Activated B cell treated with CpG ODN at 0.5 μM for 24 hours (primary cell): ENCODE measurements at regions of chr3 and their contacts with region 1.

Region 1: DNA sequence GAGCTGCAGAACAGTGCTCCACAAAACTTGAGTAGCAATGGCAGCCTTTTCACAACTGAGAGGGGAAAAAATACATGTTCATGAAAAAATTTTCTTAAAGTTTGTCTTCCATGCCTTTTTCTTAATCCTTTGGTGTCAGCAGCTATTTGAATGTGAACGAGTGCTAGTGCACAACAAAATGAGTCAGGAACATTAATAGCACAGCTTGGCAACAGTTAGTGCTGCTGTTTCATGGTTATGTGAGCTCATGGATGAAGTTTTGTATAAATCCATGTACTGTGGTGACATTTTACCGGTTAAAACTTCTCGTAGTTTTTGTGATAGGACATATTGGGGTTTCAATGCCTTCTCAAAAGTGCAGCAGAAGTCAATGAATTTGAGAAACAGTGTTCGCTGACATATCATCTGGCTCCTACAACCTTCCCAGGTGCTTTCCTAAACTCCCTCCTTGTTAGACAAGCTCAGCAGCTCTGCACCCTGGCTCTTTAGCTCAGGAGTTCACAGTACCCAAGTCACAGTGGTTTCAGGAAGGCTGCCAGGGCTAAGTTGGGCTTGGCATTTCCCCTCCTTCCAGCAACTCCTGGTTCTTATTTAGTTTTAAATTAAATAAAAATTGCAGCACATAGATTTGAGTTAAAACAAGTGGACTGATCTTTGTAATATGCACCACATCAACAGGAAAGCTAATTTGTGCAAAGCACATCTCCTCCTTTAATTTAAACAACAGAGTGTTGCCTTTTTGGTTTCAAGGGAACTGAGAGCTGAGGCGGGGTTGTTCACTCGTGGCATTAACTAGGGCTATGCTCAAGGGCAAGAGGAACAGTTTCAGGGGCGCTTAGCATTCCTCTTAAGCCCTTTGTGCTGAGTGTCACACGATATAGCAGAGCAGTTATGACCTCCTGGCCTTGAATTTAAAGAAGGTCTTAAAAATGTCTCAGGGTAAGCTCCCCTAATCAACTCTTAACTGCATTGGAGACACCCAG is 362.8 kb downstream of the CHST2 start:
- DNase-seq: no peak
- ATAC-seq: peak; percentile 49
- H3K4me3 Mint-ChIP-seq: no peak overlapping the region
- H3K27ac Mint-ChIP-seq: no peak overlapping the region
- H3K4me1 Mint-ChIP-seq: peaks cover 44% of the 10 kb centered on the region
- H3K27me3 Mint-ChIP-seq: no peaks in the 10 kb centered on the region
- CTCF ChIP-seq: no peak

Region 2: GRCh38 chr3:143421556-143421955 is 60.8 kb before region 1 on chr3:
- CTCF ChIA-PET with region 1: no interaction called
- POLR2A ChIA-PET with region 1: no interaction called
- intact Hi-C with region 1: no loop called
- DNase-seq: no peak
- ATAC-seq: no peak
- H3K4me3 Mint-ChIP-seq: no peak overlapping the region
- H3K27ac Mint-ChIP-seq: no peak overlapping the region
- H3K4me1 Mint-ChIP-seq: peaks cover 17% of the 10 kb centered on the region
- H3K27me3 Mint-ChIP-seq: no peaks in the 10 kb centered on the region
- CTCF ChIP-seq: no peak

Region 3: DNA sequence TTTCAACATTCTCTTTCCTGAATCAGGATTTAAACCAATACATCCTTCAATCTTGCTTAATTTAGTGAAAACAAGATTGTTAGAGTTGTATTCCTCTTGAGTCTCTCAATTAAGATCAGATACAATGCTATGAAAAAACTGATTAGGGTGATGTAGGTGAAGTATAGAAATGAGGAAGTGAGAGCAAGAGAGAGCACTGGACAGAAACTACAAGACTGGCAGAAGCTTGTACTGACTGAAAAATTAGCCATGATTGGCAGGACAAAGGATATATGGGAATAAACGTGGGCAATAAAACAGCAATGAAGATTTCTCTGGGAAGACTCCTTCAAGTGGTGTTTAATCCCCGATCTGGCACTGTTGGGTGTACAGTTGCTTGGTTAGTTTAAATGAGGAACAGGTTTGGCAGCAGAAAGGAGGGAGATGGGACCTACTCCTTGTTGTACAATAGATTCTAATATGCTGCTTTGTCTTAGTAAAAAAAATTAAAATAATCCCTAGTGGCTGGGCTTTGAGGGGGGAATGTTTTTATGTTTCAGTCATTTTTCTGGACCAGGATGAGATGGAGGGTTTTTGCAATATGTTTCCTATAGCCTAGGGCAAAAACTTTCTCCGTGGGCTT is 113.2 kb after region 1 on chr3:
- CTCF ChIA-PET with region 1: no interaction called
- POLR2A ChIA-PET with region 1: no interaction called
- intact Hi-C with region 1: loop called (anchors 1 kb)
- DNase-seq: no peak
- ATAC-seq: peak; percentile 95
- H3K4me3 Mint-ChIP-seq: no peak overlapping the region
- H3K27ac Mint-ChIP-seq: peak overlapping the region; percentile 13
- H3K4me1 Mint-ChIP-seq: peaks cover 14% of the 10 kb centered on the region
- H3K27me3 Mint-ChIP-seq: no peaks in the 10 kb centered on the region
- CTCF ChIP-seq: no peak

Region 4: GRCh38 chr3:144181062-144181461 is 698.7 kb after region 1 on chr3:
- CTCF ChIA-PET with region 1: no interaction called
- POLR2A ChIA-PET with region 1: no interaction called
- intact Hi-C with region 1: no loop called
- DNase-seq: no peak
- ATAC-seq: no peak
- H3K4me3 Mint-ChIP-seq: no peak overlapping the region
- H3K27ac Mint-ChIP-seq: no peak overlapping the region
- H3K4me1 Mint-ChIP-seq: no peaks in the 10 kb centered on the region
- H3K27me3 Mint-ChIP-seq: no peaks in the 10 kb centered on the region
- CTCF ChIP-seq: no peak